ENCODE measurements at regions of chr4 and their contacts with region 1.

Region 1: GRCh38 chr4:25862411-25863346 is at the start of gene SEL1L3:
- DNase-seq: peak; percentile 74
- H3K4me3 Mint-ChIP-seq: peak within 1 kb of the TSS; percentile 99
- H3K27ac Mint-ChIP-seq: peak within 1 kb of the TSS; percentile 100
- H3K4me1 Mint-ChIP-seq: peaks cover 40% of the 10 kb centered on the region
- H3K27me3 Mint-ChIP-seq: peaks cover 2% of the 10 kb centered on the region
- total RNA-seq, gene SEL1L3: 67.1 to 67.7 TPM

Region 2: GRCh38 chr4:25439918-25440477 is 422.7 kb before region 1 on chr4:
- CTCF ChIA-PET with region 1: interaction called, 3 read pairs
- POLR2A ChIA-PET with region 1: no interaction called
- intact Hi-C with region 1: loop called (anchors 2 kb)
- DNase-seq: peak; percentile 58
- H3K4me3 Mint-ChIP-seq: no peak overlapping the region
- H3K27ac Mint-ChIP-seq: no peak overlapping the region
- H3K4me1 Mint-ChIP-seq: no peaks in the 10 kb centered on the region
- H3K27me3 Mint-ChIP-seq: no peaks in the 10 kb centered on the region

Region 3: GRCh38 chr4:25844961-25845712 is 17.5 kb before region 1 on chr4:
- CTCF ChIA-PET with region 1: interaction called, 3 read pairs
- POLR2A ChIA-PET with region 1: interaction called, 5 read pairs
- intact Hi-C with region 1: loop called (anchors 1 kb)
- DNase-seq: peak; percentile 54
- H3K4me3 Mint-ChIP-seq: no peak overlapping the region
- H3K27ac Mint-ChIP-seq: peak overlapping the region; percentile 75
- H3K4me1 Mint-ChIP-seq: peaks cover 79% of the 10 kb centered on the region
- H3K27me3 Mint-ChIP-seq: no peaks in the 10 kb centered on the region

Region 4: DNA sequence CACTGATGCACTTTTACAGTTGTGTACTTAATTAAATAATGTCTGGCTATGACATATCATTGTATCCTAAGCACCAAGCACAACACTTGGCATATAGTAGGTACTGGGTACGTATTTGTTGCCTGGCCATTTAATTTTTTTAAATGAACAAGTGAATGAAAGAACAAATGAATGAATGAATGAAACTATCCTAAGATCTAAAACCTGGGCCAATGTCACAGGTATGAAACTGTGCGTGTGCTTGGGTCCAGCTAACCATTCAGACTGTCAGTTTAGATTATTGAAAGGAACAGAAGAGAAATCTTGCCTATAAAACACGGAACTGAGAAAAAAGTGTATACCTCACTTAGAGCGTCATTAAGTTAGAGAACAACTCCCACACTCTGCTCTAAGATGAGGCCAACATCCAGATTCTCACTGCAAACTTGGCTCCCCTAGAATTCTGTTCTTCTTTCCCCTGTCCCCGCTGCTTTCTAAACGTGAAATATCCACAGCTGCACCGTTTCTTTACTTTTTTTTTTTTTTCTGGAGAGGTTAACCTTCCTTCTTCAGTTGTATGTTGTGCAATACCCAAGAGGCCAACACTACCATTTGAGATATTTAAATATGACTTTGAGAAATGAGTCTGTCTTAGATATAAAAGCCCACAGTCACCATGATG is 17.4 kb after region 1 on chr4:
- CTCF ChIA-PET with region 1: no interaction called
- POLR2A ChIA-PET with region 1: no interaction called
- intact Hi-C with region 1: no loop called
- DNase-seq: no peak
- H3K4me3 Mint-ChIP-seq: no peak overlapping the region
- H3K27ac Mint-ChIP-seq: no peak overlapping the region
- H3K4me1 Mint-ChIP-seq: peaks cover 6% of the 10 kb centered on the region
- H3K27me3 Mint-ChIP-seq: no peaks in the 10 kb centered on the region

Region 5: GRCh38 chr4:25913851-25914669 is 51.4 kb after region 1 on chr4 and contains the start of gene SMIM20:
- CTCF ChIA-PET with region 1: no interaction called
- POLR2A ChIA-PET with region 1: interaction called, 8 read pairs
- intact Hi-C with region 1: loop called (anchors 1 kb)
- DNase-seq: peak; percentile 93
- H3K4me3 Mint-ChIP-seq: peak within 1 kb of the TSS; percentile 87
- H3K27ac Mint-ChIP-seq: peak within 1 kb of the TSS; percentile 94
- H3K4me1 Mint-ChIP-seq: peaks cover 17% of the 10 kb centered on the region
- H3K27me3 Mint-ChIP-seq: no peaks in the 10 kb centered on the region
- total RNA-seq, gene SMIM20: 26.0 to 28.0 TPM

Region 6: GRCh38 chr4:25938787-25939186 is 76.1 kb after region 1 on chr4:
- CTCF ChIA-PET with region 1: no interaction called
- POLR2A ChIA-PET with region 1: no interaction called
- intact Hi-C with region 1: loop called (anchors 2 kb)
- DNase-seq: peak; percentile 77
- H3K4me3 Mint-ChIP-seq: no peak overlapping the region
- H3K27ac Mint-ChIP-seq: peak overlapping the region; percentile 82
- H3K4me1 Mint-ChIP-seq: peaks cover 24% of the 10 kb centered on the region
- H3K27me3 Mint-ChIP-seq: peaks cover 20% of the 10 kb centered on the region

Region 7: GRCh38 chr4:27000820-27001219 is 1138.1 kb after region 1 on chr4:
- CTCF ChIA-PET with region 1: no interaction called
- POLR2A ChIA-PET with region 1: no interaction called
- intact Hi-C with region 1: loop called (anchors 5 kb)
- DNase-seq: no peak
- H3K4me3 Mint-ChIP-seq: no peak overlapping the region
- H3K27ac Mint-ChIP-seq: peak overlapping the region; percentile 51
- H3K4me1 Mint-ChIP-seq: peaks cover 52% of the 10 kb centered on the region
- H3K27me3 Mint-ChIP-seq: no peaks in the 10 kb centered on the region